ENCODE measurements at regions of chr1 and their contacts with region 1.

Region 1: DNA sequence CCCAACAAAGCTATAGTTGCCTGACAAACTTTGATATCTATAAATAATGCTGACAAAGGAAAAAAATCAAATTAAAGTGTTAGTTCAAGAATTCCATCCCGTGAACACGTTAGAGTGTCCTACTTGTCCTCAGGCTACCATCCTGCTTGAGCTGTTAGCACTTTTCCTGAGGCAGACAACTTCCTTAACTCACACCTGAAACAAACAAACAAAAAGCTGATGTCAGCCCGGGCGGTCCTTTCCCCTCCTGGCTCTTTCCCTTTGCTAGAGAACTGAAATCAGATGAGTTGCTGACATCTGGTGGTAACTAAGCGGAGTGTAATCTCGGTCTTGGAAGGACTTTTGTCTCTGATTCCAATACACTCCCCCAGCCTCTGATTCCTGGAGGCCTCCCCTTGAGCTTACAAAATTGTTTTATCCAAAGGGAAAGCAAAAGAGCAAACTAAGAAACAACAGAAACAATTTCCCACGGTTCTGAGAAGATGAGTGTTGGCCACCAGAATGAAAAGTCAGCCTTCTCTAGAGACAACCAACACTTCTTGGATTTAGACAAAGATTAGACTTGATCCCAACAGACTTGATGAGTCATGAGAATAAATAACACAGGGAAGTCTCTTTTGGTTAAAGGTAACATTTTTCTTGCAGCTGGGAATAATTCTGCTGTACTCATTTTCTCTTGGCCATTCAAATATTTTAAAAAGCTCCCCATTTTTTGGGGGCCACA is 135.4 kb downstream of the PROX1 start:
- DNase-seq: peak in 1 of 2 donors; percentile 42
- ATAC-seq: peak; percentile 53 to 87 (median 86)
- H3K4me3 ChIP-seq: no peak overlapping the region
- H3K27ac ChIP-seq: no peak overlapping the region
- H3K4me1 ChIP-seq: peaks cover 0 to 7% (median 0%) of the 10 kb centered on the region in 9 donors
- H3K27me3 ChIP-seq: no peaks in the 10 kb centered on the region
- CTCF ChIP-seq: peak; percentile 20 to 76 (median 62)

Region 2: GRCh38 chr1:213122514-213122929 is 1000.7 kb before region 1 on chr1:
- intact Hi-C with region 1: loop called in 5 of 10 experiments (anchors 5 to 10 kb)
- DNase-seq: no peak
- ATAC-seq: no peak
- H3K4me3 ChIP-seq: no peak overlapping the region
- H3K27ac ChIP-seq: no peak overlapping the region
- H3K4me1 ChIP-seq: peaks cover 0 to 13% (median 6%) of the 10 kb centered on the region in 9 donors
- H3K27me3 ChIP-seq: no peaks in the 10 kb centered on the region
- CTCF ChIP-seq: peak; percentile 36 to 74 (median 63)

Region 3: DNA sequence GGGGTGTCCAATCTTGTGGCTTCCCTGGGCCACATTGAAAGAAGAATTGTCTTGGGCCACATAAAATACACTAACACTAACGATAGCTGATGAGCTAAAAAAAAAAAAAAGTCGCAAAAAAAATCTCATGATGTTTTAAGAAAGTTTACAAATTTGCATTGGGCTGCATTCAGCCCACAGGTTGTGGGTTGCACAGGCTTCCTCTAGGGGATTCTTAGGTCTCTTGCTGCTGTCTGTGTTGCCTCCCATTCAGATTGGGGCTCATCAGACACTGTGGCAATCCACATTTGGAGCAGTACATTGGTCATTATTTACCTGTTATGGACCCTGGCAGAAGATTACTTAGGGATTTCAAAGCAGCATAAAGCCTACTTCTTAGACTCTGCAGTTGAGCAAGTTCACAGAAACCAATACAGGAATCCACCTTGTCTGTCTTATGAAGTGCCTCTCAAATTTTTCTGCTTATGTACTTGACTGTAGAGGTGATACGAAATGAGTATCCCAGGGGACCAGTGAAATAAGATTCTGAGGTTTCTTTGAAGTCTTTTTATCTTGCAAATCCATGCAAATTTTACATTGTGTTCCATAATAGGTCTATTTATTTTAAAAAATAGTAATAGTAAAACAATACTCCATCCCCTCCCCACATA is 866.7 kb before region 1 on chr1:
- intact Hi-C with region 1: loop called in 1 of 10 experiments (anchors 5 kb)
- DNase-seq: no peak
- ATAC-seq: no peak
- H3K4me3 ChIP-seq: no peak overlapping the region
- H3K27ac ChIP-seq: no peak overlapping the region
- H3K4me1 ChIP-seq: no peaks in the 10 kb centered on the region
- H3K27me3 ChIP-seq: no peaks in the 10 kb centered on the region
- CTCF ChIP-seq: no peak

Region 4: DNA sequence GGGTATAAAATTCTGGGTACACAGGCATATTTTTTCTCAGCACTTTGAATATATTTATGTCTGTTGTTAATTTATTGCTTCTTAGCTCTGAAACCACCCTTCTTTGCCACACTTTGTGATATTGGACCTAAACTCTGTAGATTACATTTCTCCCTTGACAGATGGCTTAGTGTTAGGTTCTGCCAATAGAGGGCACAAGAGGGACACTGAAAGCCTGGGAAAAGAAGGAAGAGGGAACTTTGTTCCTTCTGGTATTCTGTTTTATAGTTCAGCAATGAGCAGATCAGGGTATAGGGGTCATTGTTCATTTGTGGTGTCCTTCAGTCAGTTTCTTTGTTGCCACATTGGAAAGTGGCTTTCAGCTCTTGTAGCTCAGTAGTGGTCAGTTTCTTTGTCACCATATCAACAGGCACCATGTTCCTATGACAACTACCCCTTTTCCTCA is 559.0 kb before region 1 on chr1:
- intact Hi-C with region 1: loop called in 5 of 10 experiments (anchors 5 to 10 kb)
- DNase-seq: no peak
- ATAC-seq: no peak
- H3K4me3 ChIP-seq: no peak overlapping the region
- H3K27ac ChIP-seq: no peak overlapping the region
- H3K4me1 ChIP-seq: no peaks in the 10 kb centered on the region
- H3K27me3 ChIP-seq: no peaks in the 10 kb centered on the region
- CTCF ChIP-seq: peak; percentile 11 to 49 (median 38)

Region 5: DNA sequence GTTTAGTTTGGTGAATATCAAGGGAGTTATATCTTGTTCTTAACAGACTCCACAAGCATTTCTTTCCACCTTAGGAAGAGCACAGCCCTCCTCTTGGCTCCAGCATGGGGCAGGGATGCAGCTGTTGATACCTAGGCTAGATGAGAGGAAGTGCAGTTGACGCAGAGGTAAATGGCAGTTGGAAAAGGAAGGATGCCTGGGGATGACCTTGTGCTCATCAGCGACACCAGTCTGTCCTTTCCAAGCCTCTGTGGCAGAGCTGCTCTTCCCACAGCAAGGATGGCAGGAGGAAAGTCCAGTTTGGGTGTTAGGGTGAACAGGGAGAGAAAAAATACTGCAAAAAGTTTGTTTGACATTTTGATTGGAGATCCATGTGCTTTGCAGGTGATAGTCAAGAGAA is 129.3 kb before region 1 on chr1:
- intact Hi-C with region 1: loop called in 8 of 10 experiments (anchors 5 to 10 kb)
- DNase-seq: no peak
- ATAC-seq: peak in 1 of 8 donors; percentile 23
- H3K4me3 ChIP-seq: no peak overlapping the region
- H3K27ac ChIP-seq: peak overlapping the region in 5 of 10 donors; percentile 9 to 30 (median 19)
- H3K4me1 ChIP-seq: peaks cover 0 to 31% (median 14%) of the 10 kb centered on the region in 9 donors
- H3K27me3 ChIP-seq: peaks cover 0 to 39% (median 5%) of the 10 kb centered on the region in 7 donors
- CTCF ChIP-seq: no peak

Region 6: GRCh38 chr1:214078950-214079349 is 44.3 kb before region 1 on chr1:
- intact Hi-C with region 1: no loop called
- DNase-seq: no peak
- ATAC-seq: no peak
- H3K4me3 ChIP-seq: no peak overlapping the region
- H3K27ac ChIP-seq: no peak overlapping the region
- H3K4me1 ChIP-seq: no peaks in the 10 kb centered on the region
- H3K27me3 ChIP-seq: peaks cover 0 to under 1% (median 0%) of the 10 kb centered on the region in 7 donors
- CTCF ChIP-seq: no peak

Measured in heart right ventricle (tissue), 16 donors.